A549 (cell line): ENCODE measurements at regions of chr17 and their contacts with region 1.

Region 1: GRCh38 chr17:63919311-63919723 is 678 bp upstream of the GH1 start:
- DNase-seq: peak; percentile 67 to 92
- ATAC-seq: peak; percentile 83 to 97
- H3K4me3 ChIP-seq: no peak overlapping the region
- H3K27ac ChIP-seq: no peak overlapping the region
- H3K4me1 ChIP-seq: no peaks in the 10 kb centered on the region; the same call in 2 of the 3 replicates
- CTCF ChIP-seq: peak; percentile 90
- EP300 ChIP-seq: no peak
- POLR2A ChIP-seq: no peak
- RAD21 ChIP-seq: peak; percentile 91 to 95

Region 2: GRCh38 chr17:63697341-63698286 is 221.7 kb before region 1 on chr17:
- CTCF ChIA-PET with region 1: no interaction called
- POLR2A ChIA-PET with region 1: no interaction called
- DNase-seq: peak; percentile 69 to 78
- ATAC-seq: peak; percentile 31 to 69
- H3K4me3 ChIP-seq: no peak overlapping the region
- H3K27ac ChIP-seq: no peak overlapping the region
- H3K4me1 ChIP-seq: 0 out of 3 replicates have a peak, but pooled peaks cover 6% of the 10 kb centered on the region
- CTCF ChIP-seq: peak; percentile 56
- EP300 ChIP-seq: no peak
- POLR2A ChIP-seq: no peak
- RAD21 ChIP-seq: peak; percentile 31 to 40; a peak in 4 of 5 replicates

Region 3: DNA sequence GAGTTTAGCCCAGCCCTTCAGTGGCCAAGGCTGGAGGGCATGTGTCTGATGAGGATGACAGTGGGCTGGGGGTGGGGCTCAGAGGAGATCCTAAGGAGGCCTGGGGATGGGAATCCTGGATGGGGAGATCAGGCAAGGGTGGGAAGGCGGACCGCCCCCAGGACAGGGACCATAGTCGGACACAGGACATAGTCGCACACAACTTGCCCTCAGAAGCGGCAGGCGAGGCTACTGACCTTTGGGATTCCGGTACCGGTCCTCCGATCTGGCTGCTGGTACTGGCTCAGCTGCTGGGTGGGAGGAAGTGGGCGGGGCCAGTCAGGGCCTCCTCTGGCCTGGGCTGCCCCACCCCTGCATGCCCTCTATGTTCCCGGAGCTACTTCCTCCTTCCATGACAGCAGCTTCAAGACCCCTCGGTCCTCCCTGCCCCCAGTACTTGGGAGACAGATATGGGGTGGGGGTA is 11.8 kb after region 1 on chr17:
- CTCF ChIA-PET with region 1: interaction called, 132 read pairs
- POLR2A ChIA-PET with region 1: no interaction called
- DNase-seq: no peak
- ATAC-seq: peak in 1 of 2 experiments; percentile 41; a peak in 3 of 6 replicates
- H3K4me3 ChIP-seq: no peak overlapping the region
- H3K27ac ChIP-seq: no peak overlapping the region
- H3K4me1 ChIP-seq: no peaks in the 10 kb centered on the region
- CTCF ChIP-seq: no peak
- EP300 ChIP-seq: no peak
- POLR2A ChIP-seq: no peak
- RAD21 ChIP-seq: no peak

Region 4: DNA sequence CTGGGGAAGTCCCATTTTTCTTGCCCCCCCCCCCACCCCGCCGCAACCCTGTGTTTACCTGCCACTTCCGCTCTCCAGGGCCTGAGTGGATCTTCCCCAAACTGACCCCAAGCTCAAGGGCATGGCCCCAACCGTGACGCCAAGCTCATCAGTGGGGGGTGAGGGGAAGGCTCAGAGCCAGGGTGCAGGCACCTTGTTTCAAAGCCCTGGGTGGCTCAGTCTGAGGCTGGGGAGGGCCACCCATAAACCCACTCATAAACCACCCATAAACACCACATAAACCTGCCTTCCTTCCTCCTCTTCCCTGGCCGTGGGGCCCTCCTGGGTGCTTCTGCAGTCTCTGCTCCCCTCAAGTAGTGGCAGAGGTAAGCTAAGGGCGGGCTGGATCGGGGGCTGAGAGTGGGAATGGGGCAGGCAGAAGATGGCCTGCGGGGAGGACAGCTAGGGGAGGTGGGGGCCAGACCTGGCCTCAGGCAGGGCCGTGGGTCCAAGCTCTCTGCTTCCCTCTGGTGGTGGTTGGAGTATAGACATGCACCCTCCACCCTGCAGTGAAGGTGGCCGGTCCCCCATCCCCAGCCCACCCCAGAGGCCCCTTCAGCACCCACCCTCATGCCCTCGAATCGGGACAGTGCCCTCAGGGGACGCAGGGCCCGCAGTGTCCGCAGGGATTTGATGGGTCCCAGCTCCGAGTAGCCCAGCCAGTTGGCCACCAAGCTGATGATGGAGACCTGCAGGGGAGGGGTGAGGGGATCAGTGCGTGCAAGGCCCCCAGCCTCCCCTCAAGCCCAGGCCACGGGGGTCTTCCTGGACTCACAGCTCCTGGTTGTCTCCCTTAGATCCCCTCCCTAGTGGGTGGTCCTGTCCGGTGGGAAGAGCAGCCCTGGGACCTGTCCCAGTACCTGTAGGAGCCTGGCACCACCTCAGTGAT is 27.4 kb after region 1 on chr17:
- CTCF ChIA-PET with region 1: interaction called, 105 read pairs
- POLR2A ChIA-PET with region 1: interaction called, 4 read pairs
- DNase-seq: peak; percentile 45 to 84
- ATAC-seq: peak; percentile 58 to 88; a peak in 5 of 6 replicates
- H3K4me3 ChIP-seq: no peak overlapping the region
- H3K27ac ChIP-seq: no peak overlapping the region
- H3K4me1 ChIP-seq: no peaks in the 10 kb centered on the region
- CTCF ChIP-seq: peak; percentile 77
- EP300 ChIP-seq: no peak
- POLR2A ChIP-seq: no peak
- RAD21 ChIP-seq: peak; percentile 51 to 57

Region 5: GRCh38 chr17:63974594-63975192 is 55.4 kb after region 1 on chr17:
- CTCF ChIA-PET with region 1: interaction called, 24 read pairs
- POLR2A ChIA-PET with region 1: no interaction called
- DNase-seq: peak in 1 of 2 experiments; percentile 63
- ATAC-seq: peak; percentile 61 to 74
- H3K4me3 ChIP-seq: no peak overlapping the region
- H3K27ac ChIP-seq: peak overlapping the region; percentile 49 to 68; a peak in 5 of 6 replicates
- H3K4me1 ChIP-seq: peaks cover 19% of the 10 kb centered on the region
- CTCF ChIP-seq: no peak
- EP300 ChIP-seq: no peak
- POLR2A ChIP-seq: no peak
- RAD21 ChIP-seq: no peak

Region 6: GRCh38 chr17:64005734-64006167 is 86.4 kb after region 1 on chr17:
- CTCF ChIA-PET with region 1: interaction called, 16 read pairs
- POLR2A ChIA-PET with region 1: no interaction called
- DNase-seq: peak; percentile 56 to 64
- ATAC-seq: peak; percentile 22 to 66; a peak in 4 of 6 replicates
- H3K4me3 ChIP-seq: no peak overlapping the region
- H3K27ac ChIP-seq: peak overlapping the region in 1 of 2 experiments; percentile 49; a peak in 3 of 6 replicates
- H3K4me1 ChIP-seq: peaks cover 28% of the 10 kb centered on the region
- CTCF ChIP-seq: no peak
- EP300 ChIP-seq: 0 out of 5 replicates have a peak, but pooled peaks of 1 of the 2 experiments have one; percentile 11
- POLR2A ChIP-seq: no peak
- RAD21 ChIP-seq: no peak

Region 7: GRCh38 chr17:64145757-64146417 is 226.6 kb after region 1 on chr17:
- CTCF ChIA-PET with region 1: interaction called, 3 read pairs
- POLR2A ChIA-PET with region 1: interaction called, 10 read pairs
- DNase-seq: peak; percentile 99 to 100
- ATAC-seq: peak; percentile 80 to 92
- H3K4me3 ChIP-seq: peak overlapping the region; percentile 73
- H3K27ac ChIP-seq: peak overlapping the region; percentile 93 to 98
- H3K4me1 ChIP-seq: peaks cover 27% of the 10 kb centered on the region; the same call in 2 of the 3 replicates
- CTCF ChIP-seq: no peak
- EP300 ChIP-seq: no peak
- POLR2A ChIP-seq: peak; percentile 97
- RAD21 ChIP-seq: no peak